Mammary epithelial cell (primary cell): ENCODE measurements at regions of chr5 and their contacts with region 1.

Region 1: GRCh38 chr5:88690409-88691229 is 192.4 kb downstream of the MEF2C start:
- DNase-seq: peak; percentile 32
- H3K4me3 ChIP-seq: no peak overlapping the region
- H3K27ac ChIP-seq: no peak overlapping the region
- H3K4me1 ChIP-seq: no peaks in the 10 kb centered on the region
- H3K27me3 ChIP-seq: peaks cover 93% of the 10 kb centered on the region
- CTCF ChIP-seq: peak; percentile 93 to 97

Region 2: GRCh38 chr5:87432460-87432859 is 1258.2 kb before region 1 on chr5:
- CTCF ChIA-PET with region 1: no interaction called
- dilution Hi-C with region 1: no loop called
- in situ Hi-C with region 1: loop called in 1 of 2 experiments (anchors 25 kb)
- intact Hi-C with region 1: no loop called
- DNase-seq: no peak
- H3K4me3 ChIP-seq: no peak overlapping the region
- H3K27ac ChIP-seq: no peak overlapping the region
- H3K4me1 ChIP-seq: no peaks in the 10 kb centered on the region
- H3K27me3 ChIP-seq: peaks cover 7% of the 10 kb centered on the region
- CTCF ChIP-seq: no peak